H1 (cell line): ENCODE measurements at regions of chr12 and their contacts with region 1.

Region 1: GRCh38 chr12:43444940-43445564 is 107.0 kb downstream of the ADAMTS20 start:
- DNase-seq: peak in 1 of 2 experiments; percentile 71
- H3K4me3 ChIP-seq: no peak overlapping the region
- H3K27ac ChIP-seq: no peak overlapping the region
- H3K4me1 ChIP-seq: no peaks in the 10 kb centered on the region
- H3K27me3 ChIP-seq: no peaks in the 10 kb centered on the region
- CTCF ChIP-seq: peak in 2 of 3 experiments; percentile 55; a peak in 3 of 4 replicates
- EP300 ChIP-seq: no peak
- POLR2A ChIP-seq: no peak
- RAD21 ChIP-seq: peak; percentile 52 to 55

Region 2: GRCh38 chr12:43428088-43428600 is 16.9 kb before region 1 on chr12:
- CTCF ChIA-PET with region 1: interaction called, 31 read pairs
- POLR2A ChIA-PET with region 1: no interaction called
- DNase-seq: no peak
- H3K4me3 ChIP-seq: no peak overlapping the region
- H3K27ac ChIP-seq: no peak overlapping the region
- H3K4me1 ChIP-seq: no peaks in the 10 kb centered on the region
- H3K27me3 ChIP-seq: no peaks in the 10 kb centered on the region
- CTCF ChIP-seq: no peak
- EP300 ChIP-seq: no peak
- POLR2A ChIP-seq: no peak
- RAD21 ChIP-seq: no peak

Region 3: DNA sequence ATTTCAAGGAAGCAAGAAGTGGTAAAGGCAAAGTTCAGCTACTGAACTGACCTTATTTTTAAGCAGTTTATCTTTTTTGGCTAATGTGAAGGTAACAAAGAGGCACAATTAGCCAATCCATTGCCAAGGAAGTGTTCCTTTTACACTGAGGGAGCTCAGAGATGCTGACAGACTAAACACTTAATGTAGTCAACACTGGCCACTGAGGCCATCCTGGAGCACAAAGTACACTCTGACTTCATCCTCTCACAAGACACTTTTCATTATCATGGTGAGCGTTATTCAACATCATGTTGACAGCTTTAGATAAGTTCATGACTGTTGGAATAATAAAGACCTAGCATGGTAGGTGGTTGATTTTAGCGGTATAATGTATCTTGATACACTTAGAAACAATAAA is 17.0 kb after region 1 on chr12:
- CTCF ChIA-PET with region 1: interaction called, 13 read pairs
- POLR2A ChIA-PET with region 1: interaction called, 3 read pairs
- DNase-seq: no peak
- H3K4me3 ChIP-seq: no peak overlapping the region
- H3K27ac ChIP-seq: no peak overlapping the region
- H3K4me1 ChIP-seq: no peaks in the 10 kb centered on the region
- H3K27me3 ChIP-seq: no peaks in the 10 kb centered on the region
- CTCF ChIP-seq: no peak
- EP300 ChIP-seq: no peak
- POLR2A ChIP-seq: no peak
- RAD21 ChIP-seq: no peak

Region 4: GRCh38 chr12:43516045-43516444 is 71.0 kb after region 1 on chr12:
- CTCF ChIA-PET with region 1: no interaction called
- POLR2A ChIA-PET with region 1: no interaction called
- DNase-seq: no peak
- H3K4me3 ChIP-seq: no peak overlapping the region
- H3K27ac ChIP-seq: no peak overlapping the region
- H3K4me1 ChIP-seq: no peaks in the 10 kb centered on the region; a peak in 1 of 7 replicates
- H3K27me3 ChIP-seq: no peaks in the 10 kb centered on the region
- CTCF ChIP-seq: no peak
- EP300 ChIP-seq: no peak
- POLR2A ChIP-seq: no peak
- RAD21 ChIP-seq: no peak